IMR-90 (cell line): ENCODE measurements at regions of chr12 and their contacts with region 1.

Region 1: GRCh38 chr12:40733871-40734270 is 41.6 kb downstream of the CNTN1 start:
- DNase-seq: no peak
- ATAC-seq: no peak
- H3K4me3 ChIP-seq: no peak overlapping the region
- H3K27ac ChIP-seq: no peak overlapping the region
- H3K4me1 ChIP-seq: no peaks in the 10 kb centered on the region
- H3K27me3 ChIP-seq: no peaks in the 10 kb centered on the region
- CTCF ChIP-seq: no peak
- POLR2A ChIP-seq: no peak
- RAD21 ChIP-seq: no peak

Region 2: DNA sequence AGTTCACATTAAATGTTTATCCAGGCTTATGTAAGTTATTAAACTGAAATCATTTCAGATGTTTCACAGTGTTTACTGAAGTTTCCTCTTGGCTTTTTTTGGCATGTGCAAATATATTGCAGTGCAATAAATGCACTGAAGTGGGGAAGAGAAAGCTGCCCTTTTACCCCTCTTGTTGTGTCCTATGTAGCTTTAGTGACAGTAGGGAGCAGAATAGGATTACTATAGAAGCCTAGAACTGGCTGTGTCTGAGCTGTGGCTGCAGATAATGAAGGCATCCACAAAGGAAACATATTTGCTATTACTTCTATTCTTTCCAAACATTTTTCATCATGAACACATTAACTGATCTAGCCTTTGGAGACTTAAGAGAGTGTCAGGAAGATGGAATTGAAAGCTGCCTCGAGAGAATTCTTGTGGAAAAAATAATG is 65.8 kb before region 1 on chr12:
- CTCF ChIA-PET with region 1: no interaction called
- POLR2A ChIA-PET with region 1: no interaction called
- dilution Hi-C with region 1: no loop called
- in situ Hi-C with region 1: no loop called
- intact Hi-C with region 1: no loop called
- DNase-seq: no peak
- ATAC-seq: no peak
- H3K4me3 ChIP-seq: no peak overlapping the region
- H3K27ac ChIP-seq: no peak overlapping the region
- H3K4me1 ChIP-seq: no peaks in the 10 kb centered on the region
- H3K27me3 ChIP-seq: no peaks in the 10 kb centered on the region
- CTCF ChIP-seq: no peak
- POLR2A ChIP-seq: no peak
- RAD21 ChIP-seq: no peak

Region 3: GRCh38 chr12:40762072-40762471 is 28.2 kb after region 1 on chr12:
- CTCF ChIA-PET with region 1: no interaction called
- POLR2A ChIA-PET with region 1: no interaction called
- dilution Hi-C with region 1: no loop called
- in situ Hi-C with region 1: no loop called
- intact Hi-C with region 1: loop called (anchors 2 kb)
- DNase-seq: no peak
- ATAC-seq: no peak
- H3K4me3 ChIP-seq: no peak overlapping the region
- H3K27ac ChIP-seq: no peak overlapping the region
- H3K4me1 ChIP-seq: no peaks in the 10 kb centered on the region
- H3K27me3 ChIP-seq: no peaks in the 10 kb centered on the region
- CTCF ChIP-seq: no peak
- POLR2A ChIP-seq: no peak
- RAD21 ChIP-seq: no peak

Region 4: DNA sequence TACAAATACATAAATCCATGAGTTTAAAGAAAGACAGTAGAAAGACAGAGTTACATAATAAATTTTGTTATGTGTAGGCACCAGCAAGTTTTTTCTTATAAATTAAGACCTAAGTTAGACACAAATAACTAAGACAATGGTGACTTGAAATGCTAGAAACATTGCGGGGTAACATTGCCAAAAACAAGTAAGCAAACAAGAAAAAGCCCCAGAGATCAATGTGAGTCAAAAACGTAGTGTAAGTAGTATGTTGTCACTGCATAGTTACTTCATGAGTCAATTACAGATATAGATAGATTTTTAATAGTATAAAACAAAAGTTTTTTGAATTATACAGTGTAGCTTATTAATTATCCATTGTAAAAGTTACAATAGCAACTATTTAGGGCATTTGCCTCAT is 41.8 kb after region 1 on chr12:
- CTCF ChIA-PET with region 1: no interaction called
- POLR2A ChIA-PET with region 1: no interaction called
- dilution Hi-C with region 1: no loop called
- in situ Hi-C with region 1: no loop called
- intact Hi-C with region 1: no loop called
- DNase-seq: no peak
- ATAC-seq: no peak
- H3K4me3 ChIP-seq: no peak overlapping the region
- H3K27ac ChIP-seq: no peak overlapping the region
- H3K4me1 ChIP-seq: no peaks in the 10 kb centered on the region
- H3K27me3 ChIP-seq: no peaks in the 10 kb centered on the region
- CTCF ChIP-seq: no peak
- POLR2A ChIP-seq: no peak
- RAD21 ChIP-seq: no peak

Region 5: GRCh38 chr12:41325336-41325735 is 591.5 kb after region 1 on chr12:
- CTCF ChIA-PET with region 1: no interaction called
- POLR2A ChIA-PET with region 1: no interaction called
- dilution Hi-C with region 1: no loop called
- in situ Hi-C with region 1: no loop called
- intact Hi-C with region 1: no loop called
- DNase-seq: no peak
- ATAC-seq: no peak
- H3K4me3 ChIP-seq: no peak overlapping the region
- H3K27ac ChIP-seq: no peak overlapping the region
- H3K4me1 ChIP-seq: no peaks in the 10 kb centered on the region
- H3K27me3 ChIP-seq: no peaks in the 10 kb centered on the region
- CTCF ChIP-seq: no peak
- POLR2A ChIP-seq: no peak
- RAD21 ChIP-seq: no peak